ENCODE measurements at regions of chrX and their contacts with region 1.

Region 1: GRCh38 chrX:33434256-33435092 is 223.1 kb upstream of the DMD start:
- DNase-seq: peak; percentile 20
- H3K4me3 ChIP-seq: no peak overlapping the region
- H3K27ac ChIP-seq: no peak overlapping the region
- H3K4me1 ChIP-seq: no peaks in the 10 kb centered on the region
- H3K27me3 ChIP-seq: no peaks in the 10 kb centered on the region
- CTCF ChIP-seq: peak; percentile 90 to 92

Region 2: DNA sequence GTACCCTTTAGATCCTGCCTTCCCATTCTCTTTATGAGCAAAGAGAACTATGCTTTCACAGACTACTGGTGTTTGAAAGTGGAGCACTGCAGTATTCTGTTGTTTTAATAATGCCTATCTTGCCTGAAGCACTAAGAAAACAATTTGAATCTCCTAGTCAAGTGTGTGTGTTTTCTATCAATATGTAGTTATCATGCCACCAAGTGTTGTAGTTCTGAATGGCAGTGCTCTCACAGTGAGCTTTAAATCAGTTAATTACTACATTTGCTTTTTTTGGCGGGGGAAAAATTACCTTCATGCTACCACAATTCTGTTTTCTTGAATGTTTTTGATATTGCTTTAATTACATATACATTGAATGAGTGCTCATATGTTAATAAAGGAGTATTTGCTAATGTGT is 841.2 kb after region 1 on chrX:
- CTCF ChIA-PET with region 1: interaction called, 3 read pairs
- dilution Hi-C with region 1: no loop called
- in situ Hi-C with region 1: loop called in 1 of 2 experiments (anchors 25 kb)
- intact Hi-C with region 1: loop called (anchors 2 kb)
- DNase-seq: no peak
- H3K4me3 ChIP-seq: no peak overlapping the region
- H3K27ac ChIP-seq: no peak overlapping the region
- H3K4me1 ChIP-seq: no peaks in the 10 kb centered on the region
- H3K27me3 ChIP-seq: no peaks in the 10 kb centered on the region
- CTCF ChIP-seq: peak in 1 of 2 donors; percentile 24

Region 3: DNA sequence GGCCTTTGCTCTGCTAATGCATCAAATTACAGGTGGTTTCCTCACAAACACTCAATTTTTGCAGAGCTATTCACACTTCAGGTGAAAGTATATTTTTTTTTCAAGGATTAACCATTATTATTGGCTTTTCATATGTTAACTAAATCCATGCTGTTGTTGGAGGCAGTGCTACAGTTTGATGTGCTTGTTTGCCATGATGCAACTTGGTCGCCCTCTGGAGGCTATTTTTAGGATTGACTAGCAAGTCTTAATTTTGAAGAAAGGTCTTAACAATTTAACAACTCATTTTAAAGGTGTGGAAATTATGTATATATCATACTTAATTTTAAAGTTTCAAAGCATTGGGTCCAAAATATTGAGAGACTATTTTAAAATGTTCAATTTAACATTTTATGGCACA is 866.4 kb after region 1 on chrX:
- CTCF ChIA-PET with region 1: no interaction called
- dilution Hi-C with region 1: no loop called
- in situ Hi-C with region 1: loop called (anchors 10 to 25 kb)
- intact Hi-C with region 1: loop called (anchors 1 kb)
- DNase-seq: peak; percentile 12
- H3K4me3 ChIP-seq: no peak overlapping the region
- H3K27ac ChIP-seq: no peak overlapping the region
- H3K4me1 ChIP-seq: no peaks in the 10 kb centered on the region
- H3K27me3 ChIP-seq: no peaks in the 10 kb centered on the region
- CTCF ChIP-seq: peak; percentile 69 to 82